ENCODE measurements at regions of chr12 and their contacts with region 1.

Region 1: GRCh38 chr12:2682296-2683251 is 112.2 kb upstream of the FKBP4 start:
- DNase-seq: no peak

Region 2: GRCh38 chr12:2739817-2740641 is 57.5 kb after region 1 on chr12:
- intact Hi-C with region 1: no loop called
- DNase-seq: no peak

Region 3: DNA sequence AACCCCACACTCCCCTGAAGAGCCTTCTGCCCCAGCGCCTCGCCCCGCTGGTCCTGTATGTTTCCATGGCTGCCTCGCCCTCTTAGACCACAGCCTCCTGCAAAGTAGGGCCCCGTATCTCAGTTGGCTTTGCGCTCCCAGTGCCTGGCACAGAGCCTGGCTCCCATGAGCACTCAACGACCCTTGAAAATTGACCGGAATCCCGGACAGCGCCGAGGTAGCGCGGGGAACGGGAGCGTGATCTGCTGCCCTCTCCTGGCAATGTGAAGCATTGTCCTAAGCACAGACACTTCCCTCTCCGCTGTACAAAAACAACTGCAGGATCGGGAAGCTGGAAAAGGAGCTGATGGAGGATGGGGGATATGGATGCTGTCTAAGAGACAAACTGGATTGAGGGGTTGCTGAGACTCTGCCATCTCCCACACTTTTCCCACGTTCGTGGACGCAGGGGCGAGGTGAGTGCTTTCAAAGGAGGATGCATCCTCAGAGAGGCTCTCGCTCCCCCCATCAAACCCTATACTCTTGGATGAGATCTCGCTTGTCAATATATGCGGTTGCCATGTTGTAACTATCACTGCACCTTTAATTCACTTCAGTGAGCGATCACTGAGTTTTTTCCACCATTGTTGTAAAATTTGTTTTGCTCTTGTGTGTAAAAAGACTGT is 101.5 kb after region 1 on chr12:
- intact Hi-C with region 1: loop called (anchors 10 kb)
- DNase-seq: peak; percentile 86

Measured in cardiac septum (tissue), 1 donor.